Activated T-helper 2 cell treated with anti-CD3 and anti-CD28 coated beads, Interferon-gamma antibody, Interleukin-2, Interleukin-4, amounts not matched to agents 10 μg/mL and 5 μg/mL and 100 μg/mL, durations not matched to agents 14 hours and 24 hours and 36 hours (primary cell): ENCODE measurements at regions of chr5 and their contacts with region 1.

Region 1: GRCh38 chr5:160508780-160509361 is 87.2 kb downstream of the PTTG1 start:
- DNase-seq: peak; percentile 70
- H3K4me3 Mint-ChIP-seq: peak overlapping the region; percentile 14
- H3K27ac Mint-ChIP-seq: peak overlapping the region; percentile 81
- H3K4me1 Mint-ChIP-seq: peaks cover 59% of the 10 kb centered on the region
- H3K27me3 Mint-ChIP-seq: no peaks in the 10 kb centered on the region

Region 2: DNA sequence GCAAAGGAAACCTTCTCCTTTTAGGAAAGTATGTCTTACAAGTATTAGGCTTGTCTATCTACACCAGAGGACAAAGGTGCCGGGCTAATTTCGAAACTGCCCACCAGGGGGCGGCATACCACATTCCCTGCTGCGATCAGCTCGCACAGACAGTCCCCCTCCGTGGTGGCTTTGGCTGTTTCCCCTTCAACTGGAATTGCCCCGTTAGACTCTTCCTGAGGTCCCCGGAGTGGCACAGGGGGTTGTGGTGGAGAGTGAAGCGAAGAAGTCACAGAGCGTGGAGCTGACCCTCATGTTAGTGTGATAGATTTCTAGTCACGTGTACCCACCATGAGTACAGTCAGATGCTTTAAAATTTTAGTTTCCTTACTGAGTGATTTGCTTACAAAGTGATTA is 69.7 kb before region 1 on chr5:
- intact Hi-C with region 1: loop called (anchors 1 kb)
- DNase-seq: peak; percentile 81
- H3K4me3 Mint-ChIP-seq: peak overlapping the region; percentile 81
- H3K27ac Mint-ChIP-seq: peak overlapping the region; percentile 99
- H3K4me1 Mint-ChIP-seq: peaks cover 58% of the 10 kb centered on the region
- H3K27me3 Mint-ChIP-seq: no peaks in the 10 kb centered on the region

Region 3: DNA sequence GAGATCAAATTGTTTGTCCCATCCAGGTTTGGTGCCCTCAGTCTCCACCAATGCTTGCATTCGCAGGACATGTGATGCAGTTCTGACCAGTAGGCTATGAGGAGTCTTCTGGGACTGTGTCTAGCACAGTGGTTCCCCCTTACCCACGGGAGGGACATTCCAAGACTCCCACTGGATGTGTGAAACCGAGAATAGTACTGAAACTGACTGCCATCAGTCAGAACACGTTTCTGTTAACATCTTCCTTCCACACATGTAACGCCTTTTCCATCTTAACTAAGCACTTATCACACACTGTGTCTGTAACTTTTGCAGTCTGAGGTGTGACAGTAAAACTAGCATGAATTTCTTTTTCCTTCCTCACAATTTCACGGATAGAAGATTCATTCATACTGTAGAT is 12.5 kb before region 1 on chr5:
- intact Hi-C with region 1: loop called (anchors 1 kb)
- DNase-seq: no peak
- H3K4me3 Mint-ChIP-seq: no peak overlapping the region
- H3K27ac Mint-ChIP-seq: peak overlapping the region; percentile 75
- H3K4me1 Mint-ChIP-seq: peaks cover 42% of the 10 kb centered on the region
- H3K27me3 Mint-ChIP-seq: no peaks in the 10 kb centered on the region

Region 4: GRCh38 chr5:160539431-160539830 is 30.6 kb after region 1 on chr5:
- intact Hi-C with region 1: loop called (anchors 1 kb)
- DNase-seq: no peak
- H3K4me3 Mint-ChIP-seq: no peak overlapping the region
- H3K27ac Mint-ChIP-seq: no peak overlapping the region
- H3K4me1 Mint-ChIP-seq: peaks cover 32% of the 10 kb centered on the region
- H3K27me3 Mint-ChIP-seq: no peaks in the 10 kb centered on the region

Region 5: DNA sequence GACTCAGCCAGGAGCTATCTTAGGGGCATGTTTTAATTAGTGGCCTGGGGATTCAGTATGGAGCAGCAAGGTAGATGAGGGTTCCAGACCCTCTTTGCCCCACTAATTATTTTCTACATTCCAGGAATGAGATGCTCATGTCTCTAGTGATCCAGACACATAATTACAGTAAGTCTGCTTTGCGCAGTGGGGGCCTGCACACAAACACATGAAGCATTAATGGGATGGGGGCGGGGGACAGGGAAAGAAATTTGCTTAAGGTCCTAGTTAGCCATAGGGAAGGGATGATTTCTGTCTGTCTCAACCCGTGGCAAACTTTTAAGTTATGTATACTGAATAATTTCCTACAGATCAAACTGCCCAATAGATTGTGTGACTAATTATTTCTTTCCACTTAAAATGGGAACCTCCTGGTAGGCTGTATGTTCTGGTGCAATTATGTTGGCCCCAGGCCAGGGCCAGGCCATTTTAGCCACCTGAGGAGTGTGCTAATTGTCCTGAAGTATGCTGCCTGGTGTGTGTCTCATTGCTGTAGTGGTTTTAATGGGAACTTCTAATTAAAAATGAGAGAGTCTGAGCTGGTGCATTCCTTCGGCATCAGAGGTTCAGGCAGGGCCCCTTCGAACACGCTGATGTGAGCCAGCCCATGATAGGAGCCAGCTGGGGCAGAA is 47.2 kb after region 1 on chr5:
- intact Hi-C with region 1: no loop called
- DNase-seq: no peak
- H3K4me3 Mint-ChIP-seq: no peak overlapping the region
- H3K27ac Mint-ChIP-seq: no peak overlapping the region
- H3K4me1 Mint-ChIP-seq: no peaks in the 10 kb centered on the region
- H3K27me3 Mint-ChIP-seq: no peaks in the 10 kb centered on the region

Region 6: GRCh38 chr5:160685695-160686094 is 176.8 kb after region 1 on chr5:
- intact Hi-C with region 1: no loop called
- DNase-seq: no peak
- H3K4me3 Mint-ChIP-seq: no peak overlapping the region
- H3K27ac Mint-ChIP-seq: no peak overlapping the region
- H3K4me1 Mint-ChIP-seq: no peaks in the 10 kb centered on the region
- H3K27me3 Mint-ChIP-seq: peaks cover 7% of the 10 kb centered on the region

Region 7: DNA sequence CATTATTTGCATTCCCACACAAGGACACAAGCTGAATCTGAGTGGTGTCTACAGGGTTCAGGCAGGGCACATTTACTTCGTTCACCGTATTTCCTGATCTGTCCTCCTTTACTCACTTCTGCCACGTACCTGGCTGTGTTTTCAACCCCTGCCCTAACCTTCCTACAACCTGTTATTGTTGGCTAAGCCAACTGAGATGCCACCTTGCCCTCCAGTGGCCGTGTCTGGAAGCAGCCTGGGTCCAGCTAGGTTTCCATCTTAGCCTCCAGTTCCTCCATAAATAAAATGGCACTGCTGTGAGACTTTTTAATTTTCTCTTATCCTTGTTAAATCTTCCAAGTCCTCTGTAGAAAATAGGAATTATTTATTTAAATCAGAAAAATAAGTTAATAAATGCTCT is 278.4 kb after region 1 on chr5:
- intact Hi-C with region 1: loop called (anchors 2 kb)
- DNase-seq: no peak
- H3K4me3 Mint-ChIP-seq: no peak overlapping the region
- H3K27ac Mint-ChIP-seq: no peak overlapping the region
- H3K4me1 Mint-ChIP-seq: peaks cover 1% of the 10 kb centered on the region
- H3K27me3 Mint-ChIP-seq: peaks cover 4% of the 10 kb centered on the region

Region 8: DNA sequence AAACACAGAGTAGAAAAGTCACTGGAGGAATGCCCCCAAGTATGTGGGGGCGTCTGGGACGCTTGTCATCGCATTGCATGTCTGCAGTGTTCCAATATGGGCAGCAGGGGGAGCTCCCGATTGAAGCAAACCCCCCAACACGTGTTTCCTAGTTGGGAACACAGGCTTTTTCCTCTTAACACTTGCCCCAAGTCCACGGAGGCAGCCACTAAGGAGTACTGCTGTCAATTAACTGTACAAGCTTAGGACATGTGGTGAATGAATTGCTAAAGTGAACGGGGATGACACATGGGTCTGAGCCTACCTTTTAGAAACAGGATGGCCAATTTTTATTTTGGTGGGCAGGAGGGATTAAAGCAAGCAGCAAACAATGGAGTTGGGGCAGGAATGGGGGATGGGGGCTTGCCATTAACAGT is 1035.5 kb after region 1 on chr5:
- intact Hi-C with region 1: loop called (anchors 5 kb)
- DNase-seq: no peak
- H3K4me3 Mint-ChIP-seq: no peak overlapping the region
- H3K27ac Mint-ChIP-seq: no peak overlapping the region
- H3K4me1 Mint-ChIP-seq: peaks cover 19% of the 10 kb centered on the region
- H3K27me3 Mint-ChIP-seq: peaks cover 44% of the 10 kb centered on the region